Body of pancreas (tissue), 4 donors: ENCODE measurements at regions of chr20 and their contacts with region 1.

Region 1: DNA sequence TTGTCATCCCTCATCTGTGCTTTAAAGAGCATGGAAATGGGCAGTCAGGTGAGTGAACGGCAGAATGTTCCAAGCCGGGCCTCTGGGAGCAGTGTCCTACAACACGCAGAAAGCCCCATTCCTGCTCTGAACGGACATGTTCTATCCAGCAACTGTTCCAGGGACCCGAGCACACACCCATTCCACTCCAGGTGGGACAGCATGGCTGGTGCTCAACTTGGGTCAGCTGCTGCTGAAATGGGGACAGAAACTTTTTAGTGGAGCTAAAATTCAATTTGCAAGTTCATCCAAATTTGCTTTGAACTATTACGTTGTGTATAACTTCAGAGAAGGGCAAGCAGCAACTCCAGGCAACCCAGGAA is 26.6 kb downstream of the DIDO1 start:
- DNase-seq: peak in 1 of 4 donors; percentile 41
- ATAC-seq: peak; percentile 28
- H3K4me3 ChIP-seq: no peak overlapping the region
- H3K27ac ChIP-seq: peak overlapping the region in 1 of 4 donors; percentile 69
- H3K4me1 ChIP-seq: peaks cover 29% of the 10 kb centered on the region
- H3K27me3 ChIP-seq: no peaks in the 10 kb centered on the region
- CTCF ChIP-seq: peak in 2 of 7 experiments; percentile 9 to 16
- POLR2A ChIP-seq: no peak

Region 2: DNA sequence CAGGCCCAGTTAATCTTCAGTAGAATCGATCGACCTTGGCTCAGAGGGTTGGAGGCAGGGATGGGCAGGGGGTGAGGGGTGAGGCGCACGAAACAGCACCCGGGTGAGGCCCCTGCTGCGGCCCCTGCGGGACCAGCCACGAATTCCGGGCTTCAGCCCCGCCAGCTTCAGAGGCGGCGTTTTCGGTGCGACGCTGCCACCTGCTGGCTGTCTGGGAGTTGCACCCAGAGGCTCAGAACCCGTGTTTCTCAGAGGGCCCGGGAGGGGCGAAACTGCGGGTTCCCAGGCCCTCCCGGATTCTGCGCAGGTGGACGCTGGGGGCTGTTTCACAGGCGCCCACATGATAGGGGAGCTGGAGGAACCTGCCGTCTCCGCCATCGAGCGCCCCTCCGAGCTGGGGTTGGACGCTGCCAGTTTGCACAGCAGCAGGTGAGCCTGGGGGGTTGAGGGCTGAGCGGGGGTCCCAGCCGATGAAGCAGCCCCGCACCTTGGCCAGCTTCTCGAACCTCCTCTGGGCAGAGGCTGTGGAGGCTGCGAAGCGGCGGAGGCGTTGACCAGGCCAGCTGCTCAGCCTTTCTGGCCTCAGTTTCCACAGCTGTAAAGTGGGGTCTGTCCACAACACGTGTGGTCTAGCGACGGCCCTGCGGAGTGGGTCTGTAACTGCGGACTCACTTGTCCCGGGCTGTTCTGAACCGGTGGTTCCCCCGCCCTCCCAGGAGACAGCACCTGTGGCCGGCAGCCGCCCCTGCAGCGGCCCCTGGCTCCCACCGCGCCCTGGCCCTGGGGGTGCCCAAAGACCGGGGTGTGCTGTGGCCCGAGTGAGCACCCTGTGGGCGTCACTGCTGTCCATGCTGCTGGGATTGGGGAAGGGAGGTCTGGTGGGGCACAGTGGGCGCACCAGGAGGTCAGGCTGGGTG is 109.6 kb after region 1 on chr20:
- intact Hi-C with region 1: loop called (anchors 10 kb)
- DNase-seq: peak; percentile 65 to 79 (median 73)
- ATAC-seq: peak; percentile 80
- H3K4me3 ChIP-seq: no peak overlapping the region
- H3K27ac ChIP-seq: no peak overlapping the region
- H3K4me1 ChIP-seq: peaks cover 26% of the 10 kb centered on the region
- H3K27me3 ChIP-seq: peaks cover 0 to 34% of the 10 kb centered on the region in 2 donors
- CTCF ChIP-seq: peak; percentile 89 to 94 (median 93)
- POLR2A ChIP-seq: no peak

Region 3: DNA sequence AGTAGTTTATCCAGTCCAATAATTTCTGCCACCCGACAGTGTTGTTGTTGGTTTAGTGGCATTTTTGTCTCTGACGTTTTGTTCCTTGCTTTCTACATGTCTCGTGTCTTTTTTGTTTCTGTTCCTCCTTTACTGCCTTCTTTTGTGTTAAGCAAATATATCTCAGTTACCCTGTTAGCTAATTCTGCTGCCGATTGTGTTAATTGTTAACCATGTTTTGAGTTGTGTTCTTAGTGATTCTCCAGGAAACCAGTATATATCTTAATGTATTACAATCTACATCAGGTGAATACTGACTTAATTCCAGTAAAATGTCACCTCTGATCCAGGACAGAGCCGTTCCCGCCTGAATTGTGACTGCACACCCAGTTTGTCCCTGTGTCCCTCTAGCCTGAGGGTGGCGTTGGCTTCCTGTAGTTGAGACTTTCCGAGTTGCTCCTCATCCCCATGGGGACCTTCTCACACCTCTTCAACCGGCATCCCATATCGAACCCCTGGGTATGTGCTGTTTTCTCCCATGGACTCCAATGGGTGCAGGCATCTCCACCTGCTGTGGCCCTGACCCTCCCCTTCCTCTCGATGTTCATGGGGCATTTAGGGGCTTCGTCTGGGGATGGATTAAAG is 142.9 kb after region 1 on chr20:
- intact Hi-C with region 1: no loop called
- DNase-seq: no peak
- ATAC-seq: no peak
- H3K4me3 ChIP-seq: no peak overlapping the region
- H3K27ac ChIP-seq: no peak overlapping the region
- H3K4me1 ChIP-seq: no peaks in the 10 kb centered on the region
- H3K27me3 ChIP-seq: no peaks in the 10 kb centered on the region
- CTCF ChIP-seq: no peak
- POLR2A ChIP-seq: no peak